ENCODE measurements at regions of chr4 and their contacts with region 1.

Region 1: DNA sequence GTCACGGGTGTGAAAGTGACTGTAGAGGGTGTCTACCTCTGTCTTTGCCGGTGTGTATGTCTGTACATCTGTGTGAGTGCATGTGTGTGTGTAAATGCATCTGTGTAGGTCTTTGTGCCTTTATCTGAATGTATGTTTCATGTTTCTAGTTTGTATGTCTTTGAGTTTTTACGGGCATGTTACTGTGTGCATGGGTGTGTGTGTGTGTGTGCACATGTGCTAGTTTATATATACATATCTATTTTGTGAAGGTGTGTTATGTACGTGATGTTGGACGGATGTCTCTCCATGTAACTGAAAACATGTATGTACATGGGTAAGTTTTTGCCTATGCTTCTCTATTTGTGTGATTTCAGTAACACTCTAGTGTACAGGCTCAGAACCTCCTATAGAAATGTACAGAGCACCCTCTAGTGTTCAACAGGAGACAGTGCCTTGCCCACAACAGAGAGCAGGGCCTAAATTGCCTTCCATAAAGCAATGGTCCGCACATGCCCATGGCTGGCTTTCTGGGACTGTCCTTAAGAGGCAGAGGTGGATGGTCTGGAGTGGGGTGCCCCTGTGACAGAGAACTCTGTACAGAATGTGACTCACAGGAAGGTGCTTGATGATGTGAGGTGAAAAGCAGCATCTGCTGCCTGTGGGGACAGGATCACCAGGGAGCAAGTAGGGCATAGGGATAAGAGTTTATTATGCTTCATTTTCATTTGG is 343.5 kb downstream of the RAPGEF2 start:
- DNase-seq: peak; percentile 18
- H3K4me3 ChIP-seq: no peak overlapping the region
- H3K27ac ChIP-seq: no peak overlapping the region
- H3K4me1 ChIP-seq: no peaks in the 10 kb centered on the region
- H3K27me3 ChIP-seq: no peaks in the 10 kb centered on the region
- CTCF ChIP-seq: peak; percentile 88

Region 2: GRCh38 chr4:158856852-158857251 is 589.6 kb before region 1 on chr4:
- intact Hi-C with region 1: loop called (anchors 10 kb)
- DNase-seq: no peak
- H3K4me3 ChIP-seq: no peak overlapping the region
- H3K27ac ChIP-seq: no peak overlapping the region
- H3K4me1 ChIP-seq: no peaks in the 10 kb centered on the region
- H3K27me3 ChIP-seq: no peaks in the 10 kb centered on the region
- CTCF ChIP-seq: peak; percentile 43

Region 3: DNA sequence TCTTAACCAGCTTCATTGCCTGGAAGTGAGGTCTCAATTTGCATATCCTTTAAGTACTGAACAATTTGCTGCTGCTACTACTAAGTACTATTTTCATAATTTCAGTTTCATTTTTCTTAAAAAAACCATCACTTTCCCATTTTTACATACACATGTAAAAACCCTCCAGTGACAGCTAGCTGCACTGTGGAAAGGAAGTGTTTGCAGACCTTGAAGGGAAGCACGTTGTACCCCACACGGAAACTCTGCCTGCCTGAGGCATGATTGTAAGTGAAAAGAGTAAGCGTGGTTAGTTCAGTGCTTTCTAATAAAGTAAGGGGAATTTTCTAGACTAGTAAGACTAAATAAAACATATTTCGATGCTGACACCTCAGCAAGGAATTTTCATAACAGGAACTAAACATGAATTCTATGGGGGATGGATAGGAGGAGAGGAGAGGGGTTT is 240.0 kb before region 1 on chr4:
- intact Hi-C with region 1: loop called (anchors 10 kb)
- DNase-seq: no peak
- H3K4me3 ChIP-seq: no peak overlapping the region
- H3K27ac ChIP-seq: no peak overlapping the region
- H3K4me1 ChIP-seq: no peaks in the 10 kb centered on the region
- H3K27me3 ChIP-seq: no peaks in the 10 kb centered on the region
- CTCF ChIP-seq: no peak